Transverse colon (tissue), 4 donors: ENCODE measurements at regions of chr18 and their contacts with region 1.

Region 1: DNA sequence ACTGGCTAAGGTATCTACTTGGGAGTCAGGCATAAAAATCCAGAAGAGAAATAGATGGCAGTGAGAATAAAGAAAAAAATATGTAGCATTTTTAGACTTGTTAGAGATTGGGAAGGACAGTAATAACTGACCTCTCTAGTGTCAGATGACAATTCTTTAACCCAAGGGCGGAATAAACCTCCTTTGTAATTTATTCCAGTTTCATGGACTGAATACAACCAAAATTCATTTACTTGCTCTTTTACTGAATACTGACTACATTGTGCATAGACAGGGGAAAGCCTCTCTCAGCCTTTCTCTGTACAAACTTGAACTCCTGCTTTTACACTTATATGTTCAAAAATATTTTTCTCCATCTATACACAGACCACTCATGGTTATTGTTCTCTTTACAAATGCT is 475.3 kb upstream of the RAB12 start:
- DNase-seq: no peak
- H3K4me3 ChIP-seq: no peak overlapping the region
- H3K27ac ChIP-seq: no peak overlapping the region
- H3K4me1 ChIP-seq: no peaks in the 10 kb centered on the region
- H3K27me3 ChIP-seq: no peaks in the 10 kb centered on the region
- CTCF ChIP-seq: no peak
- EP300 ChIP-seq: no peak
- POLR2A ChIP-seq: no peak

Region 2: DNA sequence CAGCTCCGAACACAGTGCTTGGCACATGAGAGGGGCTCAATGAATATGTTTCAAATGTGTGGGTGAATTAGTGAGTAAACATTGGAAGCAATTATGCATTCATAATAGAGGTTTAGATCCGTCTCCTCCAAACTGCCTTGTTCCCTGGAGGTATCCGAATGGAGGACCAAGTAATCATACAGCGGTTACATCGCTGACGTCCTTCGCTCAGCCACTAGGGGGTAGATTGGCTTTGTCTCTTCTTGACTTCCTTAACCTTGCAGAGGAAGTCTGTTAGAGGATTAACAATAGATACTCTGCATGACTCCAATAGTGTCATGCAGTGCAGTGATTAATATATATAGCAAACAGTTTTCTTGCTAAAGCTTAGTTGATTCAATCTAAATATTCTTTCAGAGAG is 49.7 kb before region 1 on chr18:
- in situ Hi-C with region 1: no loop called
- intact Hi-C with region 1: no loop called
- DNase-seq: no peak
- H3K4me3 ChIP-seq: no peak overlapping the region
- H3K27ac ChIP-seq: no peak overlapping the region
- H3K4me1 ChIP-seq: no peaks in the 10 kb centered on the region
- H3K27me3 ChIP-seq: no peaks in the 10 kb centered on the region
- CTCF ChIP-seq: peak in 2 of 5 experiments; percentile 27 to 36
- EP300 ChIP-seq: no peak
- POLR2A ChIP-seq: no peak

Region 3: GRCh38 chr18:8116346-8117005 is 17.4 kb before region 1 on chr18:
- in situ Hi-C with region 1: no loop called
- intact Hi-C with region 1: loop called (anchors 1 kb)
- DNase-seq: no peak
- H3K4me3 ChIP-seq: no peak overlapping the region
- H3K27ac ChIP-seq: peak overlapping the region in 2 of 4 donors; percentile 21 to 38
- H3K4me1 ChIP-seq: no peaks in the 10 kb centered on the region
- H3K27me3 ChIP-seq: no peaks in the 10 kb centered on the region
- CTCF ChIP-seq: no peak
- EP300 ChIP-seq: no peak
- POLR2A ChIP-seq: no peak

Region 4: GRCh38 chr18:8283891-8284585 is 150.2 kb after region 1 on chr18:
- in situ Hi-C with region 1: no loop called
- intact Hi-C with region 1: no loop called
- DNase-seq: no peak
- H3K4me3 ChIP-seq: no peak overlapping the region
- H3K27ac ChIP-seq: no peak overlapping the region
- H3K4me1 ChIP-seq: no peaks in the 10 kb centered on the region
- H3K27me3 ChIP-seq: no peaks in the 10 kb centered on the region
- CTCF ChIP-seq: no peak
- EP300 ChIP-seq: no peak
- POLR2A ChIP-seq: no peak